Breast epithelium (tissue), 4 donors: ENCODE measurements at regions of chr3 and their contacts with region 1.

Region 1: GRCh38 chr3:36937492-36937891 is 7.4 kb downstream of the TRANK1 start:
- DNase-seq: no peak
- H3K4me3 ChIP-seq: no peak overlapping the region
- H3K27ac ChIP-seq: no peak overlapping the region
- H3K4me1 ChIP-seq: no peaks in the 10 kb centered on the region
- H3K27me3 ChIP-seq: no peaks in the 10 kb centered on the region
- CTCF ChIP-seq: no peak
- POLR2A ChIP-seq: no peak

Region 2: GRCh38 chr3:37753428-37753827 is 815.9 kb after region 1 on chr3:
- intact Hi-C with region 1: loop called (anchors 10 kb)
- DNase-seq: no peak
- H3K4me3 ChIP-seq: no peak overlapping the region
- H3K27ac ChIP-seq: no peak overlapping the region
- H3K4me1 ChIP-seq: no peaks in the 10 kb centered on the region
- H3K27me3 ChIP-seq: no peaks in the 10 kb centered on the region
- CTCF ChIP-seq: no peak
- POLR2A ChIP-seq: no peak